HepG2 (cell line): ENCODE measurements at regions of chr6 and their contacts with region 1.

Region 1: GRCh38 chr6:31922942-31923341 is 4.6 kb upstream of the C2 start:
- DNase-seq: peak; percentile 73
- ATAC-seq: peak; percentile 44
- H3K4me3 ChIP-seq: no peak overlapping the region
- H3K27ac ChIP-seq: no peak overlapping the region
- H3K4me1 ChIP-seq: peaks cover 80% of the 10 kb centered on the region
- H3K27me3 ChIP-seq: no peaks in the 10 kb centered on the region; a peak in 1 of 5 replicates
- CTCF ChIP-seq: peak; percentile 84
- EP300 ChIP-seq: no peak
- POLR2A ChIP-seq: no peak
- RAD21 ChIP-seq: peak; percentile 77

Region 2: GRCh38 chr6:30326526-30327260 is 1596.2 kb before region 1 on chr6 and contains the start of gene TRIM39:
- CTCF ChIA-PET with region 1: no interaction called
- POLR2A ChIA-PET with region 1: no interaction called
- in situ Hi-C with region 1: no loop called
- intact Hi-C with region 1: no loop called
- DNase-seq: peak; percentile 75
- ATAC-seq: peak; percentile 86
- H3K4me3 ChIP-seq: peak within 1 kb of the TSS; percentile 74 to 93 (median 78)
- H3K27ac ChIP-seq: peak within 1 kb of the TSS; percentile 92
- H3K4me1 ChIP-seq: peaks cover 47% of the 10 kb centered on the region
- H3K27me3 ChIP-seq: no peaks in the 10 kb centered on the region; a peak in 1 of 5 replicates
- CTCF ChIP-seq: peak; percentile 18; the same call in 1 of the 2 replicates
- EP300 ChIP-seq: no peak; a peak in 1 of 4 replicates
- POLR2A ChIP-seq: peak; percentile 56 to 61
- RAD21 ChIP-seq: peak; percentile 45; the same call in 1 of the 2 replicates
- total RNA-seq, gene TRIM39: 13.8 and 14.6 TPM in 2 replicates

Region 3: DNA sequence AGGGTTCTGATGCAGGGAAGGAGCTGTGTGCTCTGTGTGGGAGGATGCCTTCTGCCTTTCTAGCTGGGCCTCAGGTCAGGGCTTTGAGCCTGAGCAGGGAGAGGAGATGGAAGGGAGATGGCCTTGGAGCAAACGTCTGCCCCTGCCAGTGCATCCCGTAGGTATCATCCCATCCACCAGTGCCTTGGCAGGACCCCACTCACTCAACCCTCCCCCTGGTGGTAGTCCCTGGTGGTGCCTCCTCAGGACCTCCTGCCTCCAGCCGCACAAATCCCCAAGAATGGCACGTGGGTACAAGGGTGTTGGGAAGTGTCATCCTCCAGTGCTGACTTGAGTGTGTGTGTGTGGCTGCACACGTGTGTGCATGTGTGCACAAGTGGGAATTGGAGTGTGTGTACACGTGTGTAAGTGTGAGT is 448.1 kb before region 1 on chr6:
- CTCF ChIA-PET with region 1: no interaction called
- POLR2A ChIA-PET with region 1: no interaction called
- in situ Hi-C with region 1: no loop called
- intact Hi-C with region 1: no loop called
- DNase-seq: no peak
- ATAC-seq: peak; percentile 38
- H3K4me3 ChIP-seq: no peak overlapping the region
- H3K27ac ChIP-seq: no peak overlapping the region
- H3K4me1 ChIP-seq: no peaks in the 10 kb centered on the region
- H3K27me3 ChIP-seq: peaks cover 7 to 49% of the 10 kb centered on the region in 2 experiments; a peak in 4 of 5 replicates
- CTCF ChIP-seq: peak; percentile 52
- EP300 ChIP-seq: no peak
- POLR2A ChIP-seq: no peak
- RAD21 ChIP-seq: no peak

Region 4: GRCh38 chr6:31901953-31902643 is 20.8 kb before region 1 on chr6 and contains the start of gene ZBTB12:
- CTCF ChIA-PET with region 1: no interaction called
- POLR2A ChIA-PET with region 1: interaction called, 27 read pairs
- in situ Hi-C with region 1: no loop called
- intact Hi-C with region 1: loop called (anchors 2 kb)
- DNase-seq: peak; percentile 96
- ATAC-seq: peak; percentile 76
- H3K4me3 ChIP-seq: peak within 1 kb of the TSS; percentile 65 to 78 (median 67)
- H3K27ac ChIP-seq: peak within 1 kb of the TSS; percentile 60
- H3K4me1 ChIP-seq: peaks cover 51% of the 10 kb centered on the region
- H3K27me3 ChIP-seq: peaks cover 1 to 13% of the 10 kb centered on the region in 2 experiments; a peak in 2 of 5 replicates
- CTCF ChIP-seq: peak; percentile 48
- EP300 ChIP-seq: peak in 1 of 2 experiments; percentile 30; a peak in 1 of 4 replicates
- POLR2A ChIP-seq: peak; percentile 58 to 78; a peak in 3 of 4 replicates
- RAD21 ChIP-seq: peak; percentile 88
- total RNA-seq, gene ZBTB12: 6.0 and 6.8 TPM in 2 replicates

Region 5: DNA sequence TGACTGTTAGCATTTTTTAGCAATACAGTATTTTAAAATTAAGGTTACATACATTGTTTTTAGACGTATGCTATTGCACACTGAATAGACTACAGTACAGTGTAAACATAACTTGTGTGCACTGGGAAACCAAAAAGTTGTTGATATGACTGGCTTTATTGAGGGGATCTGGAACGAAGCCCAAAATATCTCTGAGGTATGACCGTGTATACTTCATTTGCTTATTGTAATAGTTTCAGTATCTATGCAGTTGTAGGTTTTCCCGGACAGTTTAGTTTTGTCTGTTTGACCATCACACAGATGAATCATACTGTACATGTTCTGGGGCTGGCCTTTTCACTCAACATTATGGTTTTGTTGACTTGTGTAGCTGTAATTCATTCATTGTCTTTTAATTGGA is 14.2 kb before region 1 on chr6:
- CTCF ChIA-PET with region 1: no interaction called
- POLR2A ChIA-PET with region 1: interaction called, 27 read pairs
- in situ Hi-C with region 1: no loop called
- intact Hi-C with region 1: loop called (anchors 2 kb)
- DNase-seq: peak; percentile 60
- ATAC-seq: peak; percentile 16; the same call in 1 of the 3 replicates
- H3K4me3 ChIP-seq: no peak overlapping the region
- H3K27ac ChIP-seq: no peak overlapping the region
- H3K4me1 ChIP-seq: peaks cover 49% of the 10 kb centered on the region
- H3K27me3 ChIP-seq: peaks cover 1 to 6% of the 10 kb centered on the region in 2 experiments; a peak in 1 of 5 replicates
- CTCF ChIP-seq: no peak
- EP300 ChIP-seq: no peak
- POLR2A ChIP-seq: no peak
- RAD21 ChIP-seq: no peak

Region 6: GRCh38 chr6:31940256-31940664 is 17.3 kb after region 1 on chr6:
- CTCF ChIA-PET with region 1: no interaction called
- POLR2A ChIA-PET with region 1: interaction called, 151 read pairs
- in situ Hi-C with region 1: no loop called
- intact Hi-C with region 1: loop called (anchors 1 kb)
- DNase-seq: peak; percentile 78
- ATAC-seq: peak; percentile 59
- H3K4me3 ChIP-seq: no peak overlapping the region
- H3K27ac ChIP-seq: peak overlapping the region; percentile 48
- H3K4me1 ChIP-seq: peaks cover 62% of the 10 kb centered on the region
- H3K27me3 ChIP-seq: no peaks in the 10 kb centered on the region
- CTCF ChIP-seq: no peak
- EP300 ChIP-seq: no peak
- POLR2A ChIP-seq: no peak
- RAD21 ChIP-seq: no peak